ENCODE measurements at regions of chr3 and their contacts with region 1.

Region 1: DNA sequence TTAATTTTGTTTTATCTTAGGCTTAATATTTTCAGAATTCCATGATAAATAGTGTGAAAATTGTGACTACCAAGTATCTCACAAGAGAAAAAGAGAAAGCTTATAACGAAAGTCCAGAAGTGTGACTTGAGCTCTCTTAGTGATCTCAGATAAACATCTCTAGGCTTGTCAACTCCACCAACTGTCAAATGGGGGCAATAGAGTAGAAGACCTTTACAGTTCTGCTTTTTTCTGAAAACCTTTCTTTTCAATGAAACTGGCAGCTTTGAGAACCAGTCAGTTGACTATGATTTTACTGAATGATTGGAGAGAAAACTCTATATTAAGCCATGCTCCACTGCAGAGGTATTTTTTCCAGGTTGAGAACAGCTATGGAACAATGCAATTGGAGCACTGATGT is 119.2 kb upstream of the TP63 start:
- DNase-seq: no peak
- ATAC-seq: no peak
- H3K4me3 ChIP-seq: no peak overlapping the region
- H3K27ac ChIP-seq: no peak overlapping the region
- H3K4me1 ChIP-seq: no peaks in the 10 kb centered on the region
- H3K27me3 ChIP-seq: no peaks in the 10 kb centered on the region

Region 2: GRCh38 chr3:189537135-189537534 is 25.1 kb after region 1 on chr3:
- intact Hi-C with region 1: loop called in 1 of 2 experiments (anchors 2 kb)
- DNase-seq: no peak
- ATAC-seq: no peak
- H3K4me3 ChIP-seq: no peak overlapping the region
- H3K27ac ChIP-seq: no peak overlapping the region
- H3K4me1 ChIP-seq: no peaks in the 10 kb centered on the region
- H3K27me3 ChIP-seq: no peaks in the 10 kb centered on the region